GM12878 (cell line): ENCODE measurements at regions of chr7 and their contacts with region 1.

Region 1: GRCh38 chr7:17991866-17992648 is 35.6 kb downstream of the PRPS1L1 start:
- DNase-seq: no peak
- ATAC-seq: peak; percentile 79
- H3K4me3 ChIP-seq: no peak overlapping the region
- H3K27ac ChIP-seq: no peak overlapping the region
- H3K4me1 ChIP-seq: no peaks in the 10 kb centered on the region
- H3K27me3 ChIP-seq: no peaks in the 10 kb centered on the region
- CTCF ChIP-seq: peak; percentile 33 to 55 (median 41)
- EP300 ChIP-seq: no peak
- POLR2A ChIP-seq: no peak
- RAD21 ChIP-seq: peak; percentile 63

Region 2: GRCh38 chr7:17706734-17707133 is 285.3 kb before region 1 on chr7:
- CTCF ChIA-PET with region 1: interaction called, 12 read pairs
- POLR2A ChIA-PET with region 1: no interaction called
- RAD21 ChIA-PET with region 1: interaction called, 3 read pairs
- SMC1A ChIA-PET with region 1: interaction called, 7 read pairs
- in situ Hi-C with region 1: no loop called
- intact Hi-C with region 1: loop called (anchors 5 kb)
- DNase-seq: peak; percentile 12
- ATAC-seq: peak; percentile 93
- H3K4me3 ChIP-seq: no peak overlapping the region
- H3K27ac ChIP-seq: no peak overlapping the region
- H3K4me1 ChIP-seq: no peaks in the 10 kb centered on the region
- H3K27me3 ChIP-seq: no peaks in the 10 kb centered on the region
- CTCF ChIP-seq: peak; percentile 64 to 74 (median 68)
- EP300 ChIP-seq: no peak
- POLR2A ChIP-seq: no peak
- RAD21 ChIP-seq: peak; percentile 94

Region 3: DNA sequence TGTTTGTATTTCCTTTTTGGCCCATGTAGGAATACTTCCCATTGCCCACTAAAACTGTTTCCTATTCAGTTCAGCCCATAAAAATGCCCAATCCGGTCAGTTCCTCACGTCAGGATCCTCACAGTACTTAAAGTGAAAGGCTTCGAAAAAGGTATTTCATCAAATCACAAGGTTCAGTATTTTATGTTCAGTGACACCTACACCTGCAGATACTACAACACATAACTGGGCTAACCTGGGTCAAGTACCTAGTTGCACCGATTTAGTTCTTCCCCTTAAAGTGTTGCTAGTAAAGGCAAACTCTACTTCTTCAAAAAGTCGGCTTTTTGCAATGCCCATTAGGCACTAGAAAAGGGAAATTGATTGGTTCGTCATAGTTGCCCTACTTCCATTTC is 52.8 kb before region 1 on chr7:
- CTCF ChIA-PET with region 1: interaction called, 10 read pairs
- POLR2A ChIA-PET with region 1: interaction called, 4 read pairs
- RAD21 ChIA-PET with region 1: no interaction called
- SMC1A ChIA-PET with region 1: interaction called, 3 read pairs
- in situ Hi-C with region 1: no loop called
- intact Hi-C with region 1: no loop called
- DNase-seq: no peak
- ATAC-seq: no peak
- H3K4me3 ChIP-seq: peak overlapping the region; percentile 96
- H3K27ac ChIP-seq: peak overlapping the region; percentile 87; the same call in 1 of the 2 replicates
- H3K4me1 ChIP-seq: peaks cover 9% of the 10 kb centered on the region
- H3K27me3 ChIP-seq: peaks cover 0 to 4% of the 10 kb centered on the region in 2 experiments; a peak in 1 of 4 replicates
- CTCF ChIP-seq: no peak
- EP300 ChIP-seq: no peak
- POLR2A ChIP-seq: no peak
- RAD21 ChIP-seq: no peak